Caco-2 (cell line): ENCODE measurements at regions of chr5 and their contacts with region 1.

Region 1: GRCh38 chr5:152505442-152506042 is 100.5 kb upstream of the NMUR2 start:
- DNase-seq: peak; percentile 58 to 61
- H3K4me3 ChIP-seq: no peak overlapping the region
- H3K4me3 Mint-ChIP-seq: no peak overlapping the region
- H3K27ac Mint-ChIP-seq: no peak overlapping the region
- H3K4me1 ChIP-seq: no peaks in the 10 kb centered on the region
- H3K4me1 Mint-ChIP-seq: no peaks in the 10 kb centered on the region
- H3K27me3 ChIP-seq: no peaks in the 10 kb centered on the region
- H3K27me3 Mint-ChIP-seq: peaks cover 11% of the 10 kb centered on the region
- CTCF ChIP-seq: peak; percentile 51 to 59

Region 2: DNA sequence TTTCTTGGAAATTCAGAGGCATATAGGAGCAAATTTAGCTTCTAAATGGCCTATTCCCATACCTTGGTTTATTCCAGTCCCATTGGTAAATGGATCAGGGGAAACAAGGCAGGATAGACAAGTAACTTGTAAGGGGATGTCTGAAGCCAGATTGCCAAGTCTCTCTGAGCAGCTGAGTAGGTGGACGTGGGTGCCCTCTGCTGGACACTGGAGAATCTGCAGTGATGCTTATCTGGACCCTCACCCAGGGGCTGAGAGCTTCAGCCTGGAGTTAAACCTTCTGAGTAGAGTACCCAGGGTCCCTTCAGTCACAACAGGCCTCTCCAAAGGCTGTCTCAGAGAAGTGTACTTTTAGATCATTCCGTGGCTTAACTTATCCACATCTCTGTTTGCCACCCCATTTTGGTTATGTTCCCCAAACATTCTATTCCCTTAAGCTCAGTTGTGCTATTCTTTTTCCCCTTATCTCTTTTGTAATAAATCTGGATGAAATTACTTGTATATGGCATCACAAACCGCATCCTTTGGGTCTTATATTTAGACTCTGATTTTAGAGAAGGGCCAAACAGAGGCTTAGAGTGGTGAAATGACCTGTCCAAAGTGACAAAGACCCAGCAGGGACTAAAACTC is 362.6 kb before region 1 on chr5:
- CTCF ChIA-PET with region 1: no interaction called
- POLR2A ChIA-PET with region 1: no interaction called
- intact Hi-C with region 1: loop called (anchors 10 kb)
- DNase-seq: peak; percentile 61 to 75
- H3K4me3 ChIP-seq: no peak overlapping the region
- H3K4me3 Mint-ChIP-seq: no peak overlapping the region
- H3K27ac Mint-ChIP-seq: no peak overlapping the region
- H3K4me1 ChIP-seq: no peaks in the 10 kb centered on the region
- H3K4me1 Mint-ChIP-seq: no peaks in the 10 kb centered on the region
- H3K27me3 ChIP-seq: no peaks in the 10 kb centered on the region; the same call in 1 of the 2 replicates
- H3K27me3 Mint-ChIP-seq: peaks cover 8% of the 10 kb centered on the region
- CTCF ChIP-seq: peak; percentile 78 to 93

Region 3: GRCh38 chr5:152288499-152288898 is 217.0 kb before region 1 on chr5:
- CTCF ChIA-PET with region 1: no interaction called
- POLR2A ChIA-PET with region 1: no interaction called
- intact Hi-C with region 1: loop called (anchors 5 kb)
- DNase-seq: no peak
- H3K4me3 ChIP-seq: no peak overlapping the region
- H3K4me3 Mint-ChIP-seq: no peak overlapping the region
- H3K27ac Mint-ChIP-seq: no peak overlapping the region
- H3K4me1 ChIP-seq: no peaks in the 10 kb centered on the region
- H3K4me1 Mint-ChIP-seq: peaks cover 11% of the 10 kb centered on the region
- H3K27me3 ChIP-seq: no peaks in the 10 kb centered on the region
- H3K27me3 Mint-ChIP-seq: peaks cover 3% of the 10 kb centered on the region
- CTCF ChIP-seq: no peak